Naive thymus-derived CD4-positive, alpha-beta T cell (primary cell): ENCODE measurements at regions of chr6 and their contacts with region 1.

Region 1: DNA sequence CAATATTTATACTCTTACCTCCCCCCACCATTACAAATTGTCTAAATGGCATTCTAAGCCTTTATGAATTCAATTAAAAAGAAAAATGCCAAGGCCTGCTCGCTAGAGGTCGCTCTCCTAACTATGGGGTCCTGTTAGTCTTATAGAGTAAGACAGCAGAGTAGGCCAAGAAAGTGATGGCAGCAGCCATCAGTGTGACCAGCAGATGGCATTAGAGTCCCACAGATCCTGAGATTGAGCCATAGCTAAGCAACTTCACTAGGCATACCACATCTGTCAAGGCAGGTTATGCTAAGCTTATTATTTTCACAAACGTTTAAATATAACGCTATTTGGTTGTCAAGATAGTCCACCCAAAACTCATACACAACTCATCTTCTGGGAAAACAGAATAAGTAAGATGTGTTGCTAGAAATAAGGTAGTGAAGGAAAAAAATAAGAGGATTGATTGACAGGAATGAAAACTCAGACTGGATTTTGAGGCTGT is 57.6 kb upstream of the SCAF8 start:
- DNase-seq: peak; percentile 60 to 89 (median 86)
- ATAC-seq: peak; percentile 100
- H3K4me3 ChIP-seq: no peak overlapping the region
- H3K4me3 Mint-ChIP-seq: no peak overlapping the region
- H3K27ac ChIP-seq: no peak overlapping the region
- H3K27ac Mint-ChIP-seq: no peak overlapping the region
- H3K4me1 ChIP-seq: no peaks in the 10 kb centered on the region
- H3K4me1 Mint-ChIP-seq: no peaks in the 10 kb centered on the region
- H3K27me3 ChIP-seq: no peaks in the 10 kb centered on the region
- H3K27me3 Mint-ChIP-seq: peaks cover 0 to 3% (median 0%) of the 10 kb centered on the region in 5 donors

Region 2: DNA sequence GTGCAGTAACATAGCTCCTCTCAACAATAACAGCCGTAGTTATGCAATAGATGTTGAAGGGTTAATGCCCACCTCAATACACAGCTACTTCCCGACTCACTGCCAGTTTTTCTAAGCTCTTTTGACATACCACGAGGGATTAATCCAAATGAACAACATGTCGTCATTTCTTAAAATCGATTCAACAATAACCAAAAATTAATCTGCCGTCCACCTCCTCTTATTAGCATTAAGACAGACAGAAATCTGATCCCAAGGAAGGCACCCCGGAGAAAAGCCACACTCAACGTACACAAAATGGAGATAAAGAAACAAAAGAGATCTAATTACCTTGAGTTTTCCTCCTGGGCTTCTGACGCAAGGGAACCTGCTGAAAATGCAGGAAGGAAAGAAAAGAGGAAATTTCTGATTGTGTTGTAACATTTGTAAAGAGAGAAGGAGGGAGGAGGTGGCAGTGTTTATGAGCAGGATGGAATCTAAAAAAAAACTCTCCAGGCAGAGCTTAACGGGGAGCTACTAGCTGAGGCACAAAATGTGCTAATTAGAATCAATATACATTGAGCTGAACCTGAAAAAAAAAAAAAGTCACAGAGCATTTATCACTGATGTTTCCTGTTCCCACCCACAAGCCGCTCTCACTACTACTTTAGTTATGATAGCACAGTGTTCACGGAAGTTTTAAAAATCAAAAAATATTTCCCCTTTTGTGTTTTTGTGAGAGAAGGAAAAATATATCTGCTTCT is 428.4 kb before region 1 on chr6:
- CTCF ChIA-PET with region 1: no interaction called
- POLR2A ChIA-PET with region 1: no interaction called
- intact Hi-C with region 1: no loop called
- DNase-seq: peak in 6 of 9 donors; percentile 45 to 67 (median 56)
- ATAC-seq: peak; percentile 64
- H3K4me3 ChIP-seq: peak overlapping the region; percentile 62
- H3K4me3 Mint-ChIP-seq: peak overlapping the region; percentile 84 to 100 (median 96)
- H3K27ac ChIP-seq: peak overlapping the region; percentile 81
- H3K27ac Mint-ChIP-seq: peak overlapping the region; percentile 90 to 97 (median 96)
- H3K4me1 ChIP-seq: peaks cover 52 to 59% of the 10 kb centered on the region in 2 donors
- H3K4me1 Mint-ChIP-seq: peaks cover 59 to 81% (median 77%) of the 10 kb centered on the region in 7 donors
- H3K27me3 ChIP-seq: no peaks in the 10 kb centered on the region
- H3K27me3 Mint-ChIP-seq: peaks cover 0 to 14% (median 0%) of the 10 kb centered on the region in 5 donors

Region 3: DNA sequence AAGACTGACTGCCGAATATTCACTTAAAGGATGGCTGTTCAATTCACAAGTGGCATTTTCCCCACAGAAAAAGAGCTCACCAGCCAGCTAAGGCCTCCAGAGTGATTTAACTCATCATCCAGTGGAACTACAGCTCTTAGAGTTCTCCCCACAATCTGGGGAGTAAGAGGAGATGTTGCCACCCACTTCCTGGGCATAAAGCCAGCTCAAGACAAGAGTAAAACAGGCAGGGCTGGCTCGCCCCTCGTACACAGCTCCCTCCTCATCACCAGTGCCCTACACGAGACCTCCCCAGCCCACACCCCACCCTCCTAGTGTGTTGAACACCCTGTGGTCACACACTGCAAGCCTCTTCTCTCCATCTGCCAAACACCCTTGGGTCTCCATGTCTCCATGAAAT is 271.9 kb before region 1 on chr6:
- CTCF ChIA-PET with region 1: no interaction called
- POLR2A ChIA-PET with region 1: no interaction called
- intact Hi-C with region 1: no loop called
- DNase-seq: no peak
- ATAC-seq: no peak
- H3K4me3 ChIP-seq: no peak overlapping the region
- H3K4me3 Mint-ChIP-seq: no peak overlapping the region
- H3K27ac ChIP-seq: no peak overlapping the region
- H3K27ac Mint-ChIP-seq: no peak overlapping the region
- H3K4me1 ChIP-seq: no peaks in the 10 kb centered on the region
- H3K4me1 Mint-ChIP-seq: no peaks in the 10 kb centered on the region
- H3K27me3 ChIP-seq: no peaks in the 10 kb centered on the region
- H3K27me3 Mint-ChIP-seq: no peaks in the 10 kb centered on the region

Region 4: DNA sequence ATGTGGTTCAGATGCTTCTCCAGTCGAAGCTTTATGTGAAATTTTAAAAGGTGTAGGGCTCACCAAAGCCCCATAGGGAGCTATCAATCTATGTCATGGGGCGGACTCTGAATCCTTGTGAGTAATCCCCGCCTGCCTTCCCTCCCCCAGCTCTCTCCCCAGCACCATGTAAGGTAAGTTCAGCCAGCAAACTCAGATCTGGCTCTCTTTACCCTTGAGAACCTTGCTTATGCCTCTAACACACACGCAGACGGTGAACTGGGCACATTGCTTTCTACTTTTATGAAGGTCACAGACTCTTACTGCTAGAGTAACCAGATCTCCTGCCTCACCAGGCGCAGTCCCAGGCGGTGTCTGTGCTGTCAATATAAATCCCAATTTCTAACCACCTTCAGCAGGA is 82.5 kb before region 1 on chr6:
- CTCF ChIA-PET with region 1: no interaction called
- POLR2A ChIA-PET with region 1: no interaction called
- intact Hi-C with region 1: no loop called
- DNase-seq: no peak
- ATAC-seq: no peak
- H3K4me3 ChIP-seq: no peak overlapping the region
- H3K4me3 Mint-ChIP-seq: no peak overlapping the region
- H3K27ac ChIP-seq: no peak overlapping the region
- H3K27ac Mint-ChIP-seq: no peak overlapping the region
- H3K4me1 ChIP-seq: no peaks in the 10 kb centered on the region
- H3K4me1 Mint-ChIP-seq: no peaks in the 10 kb centered on the region
- H3K27me3 ChIP-seq: no peaks in the 10 kb centered on the region
- H3K27me3 Mint-ChIP-seq: no peaks in the 10 kb centered on the region

Region 5: DNA sequence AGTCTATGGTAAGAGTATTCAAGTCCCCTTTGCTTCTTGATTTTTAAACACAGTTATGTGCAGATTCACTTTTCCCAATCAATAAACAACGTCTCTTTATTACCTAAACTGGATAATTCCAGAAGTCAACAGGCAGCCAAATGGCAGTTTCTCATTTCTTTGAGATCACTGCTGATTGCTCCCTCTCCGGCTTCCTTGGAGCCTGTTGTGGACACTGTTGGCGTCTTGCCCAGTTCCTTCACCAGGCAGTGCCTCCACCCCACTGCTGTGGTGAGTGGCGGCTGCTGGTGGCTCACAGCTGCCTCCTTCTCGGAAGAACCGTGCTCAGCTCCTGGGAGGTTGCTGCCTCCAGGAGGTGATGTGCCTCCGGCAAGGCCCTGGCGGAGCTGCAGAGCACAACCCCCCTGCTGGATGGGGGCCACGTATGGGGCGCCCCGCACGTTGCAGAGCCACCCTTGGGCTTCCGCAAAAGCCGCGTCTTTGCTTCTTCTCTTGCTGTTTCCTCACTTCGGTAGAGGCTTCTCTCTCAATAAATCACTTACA is 60.1 kb before region 1 on chr6:
- CTCF ChIA-PET with region 1: no interaction called
- POLR2A ChIA-PET with region 1: no interaction called
- intact Hi-C with region 1: no loop called
- DNase-seq: no peak
- ATAC-seq: no peak
- H3K4me3 ChIP-seq: no peak overlapping the region
- H3K4me3 Mint-ChIP-seq: no peak overlapping the region
- H3K27ac ChIP-seq: no peak overlapping the region
- H3K27ac Mint-ChIP-seq: no peak overlapping the region
- H3K4me1 ChIP-seq: no peaks in the 10 kb centered on the region
- H3K4me1 Mint-ChIP-seq: peaks cover 0 to 2% (median 0%) of the 10 kb centered on the region in 7 donors
- H3K27me3 ChIP-seq: no peaks in the 10 kb centered on the region
- H3K27me3 Mint-ChIP-seq: peaks cover 0 to 5% (median 0%) of the 10 kb centered on the region in 5 donors

Region 6: GRCh38 chr6:154705471-154706113 is 29.9 kb after region 1 on chr6:
- CTCF ChIA-PET with region 1: interaction called, 4 read pairs
- POLR2A ChIA-PET with region 1: no interaction called
- intact Hi-C with region 1: loop called in 1 of 2 experiments (anchors 1 kb)
- DNase-seq: peak in 3 of 9 donors; percentile 5 to 13 (median 7)
- ATAC-seq: no peak
- H3K4me3 ChIP-seq: no peak overlapping the region
- H3K4me3 Mint-ChIP-seq: no peak overlapping the region
- H3K27ac ChIP-seq: no peak overlapping the region
- H3K27ac Mint-ChIP-seq: no peak overlapping the region
- H3K4me1 ChIP-seq: no peaks in the 10 kb centered on the region
- H3K4me1 Mint-ChIP-seq: no peaks in the 10 kb centered on the region
- H3K27me3 ChIP-seq: no peaks in the 10 kb centered on the region
- H3K27me3 Mint-ChIP-seq: peaks cover 4 to 26% (median 13%) of the 10 kb centered on the region in 5 donors

Region 7: DNA sequence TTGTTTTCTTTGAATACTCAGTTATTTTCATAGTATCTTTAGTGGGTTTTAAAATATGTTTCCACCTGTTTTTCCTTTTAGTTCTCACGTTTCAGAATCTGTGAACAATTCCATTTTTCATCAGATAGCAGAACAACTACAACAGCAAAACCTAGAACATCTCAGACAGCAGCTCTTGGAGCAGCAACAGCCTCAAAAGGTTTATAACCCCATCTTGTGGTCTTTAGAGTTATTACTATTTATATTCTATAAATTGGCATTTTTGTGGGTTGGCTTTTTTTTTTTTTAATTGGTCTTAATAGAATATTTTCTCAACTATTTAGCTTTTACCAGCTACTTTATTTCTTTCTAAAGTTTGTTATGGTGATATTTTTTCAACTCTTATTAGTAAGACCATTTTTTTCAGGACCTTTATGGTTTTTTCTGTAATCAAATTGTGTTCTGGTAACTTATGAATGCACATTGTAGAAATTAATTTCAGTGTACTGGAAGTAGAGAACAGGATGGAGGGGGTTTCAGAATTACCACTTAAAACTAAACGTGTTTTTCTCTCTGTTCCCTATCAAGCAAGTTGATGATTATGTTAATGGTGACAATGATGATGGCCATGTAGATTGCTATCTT is 129.8 kb after region 1 on chr6:
- CTCF ChIA-PET with region 1: interaction called, 105 read pairs
- POLR2A ChIA-PET with region 1: no interaction called
- intact Hi-C with region 1: loop called (anchors 1 kb)
- DNase-seq: peak in 7 of 9 donors; percentile 16 to 59 (median 44)
- ATAC-seq: peak; percentile 80
- H3K4me3 ChIP-seq: no peak overlapping the region
- H3K4me3 Mint-ChIP-seq: no peak overlapping the region
- H3K27ac ChIP-seq: no peak overlapping the region
- H3K27ac Mint-ChIP-seq: peak overlapping the region in 3 of 9 donors; percentile 26 to 66 (median 48)
- H3K4me1 ChIP-seq: no peaks in the 10 kb centered on the region
- H3K4me1 Mint-ChIP-seq: peaks cover 1 to 8% (median 5%) of the 10 kb centered on the region in 7 donors
- H3K27me3 ChIP-seq: no peaks in the 10 kb centered on the region
- H3K27me3 Mint-ChIP-seq: no peaks in the 10 kb centered on the region

Region 8: DNA sequence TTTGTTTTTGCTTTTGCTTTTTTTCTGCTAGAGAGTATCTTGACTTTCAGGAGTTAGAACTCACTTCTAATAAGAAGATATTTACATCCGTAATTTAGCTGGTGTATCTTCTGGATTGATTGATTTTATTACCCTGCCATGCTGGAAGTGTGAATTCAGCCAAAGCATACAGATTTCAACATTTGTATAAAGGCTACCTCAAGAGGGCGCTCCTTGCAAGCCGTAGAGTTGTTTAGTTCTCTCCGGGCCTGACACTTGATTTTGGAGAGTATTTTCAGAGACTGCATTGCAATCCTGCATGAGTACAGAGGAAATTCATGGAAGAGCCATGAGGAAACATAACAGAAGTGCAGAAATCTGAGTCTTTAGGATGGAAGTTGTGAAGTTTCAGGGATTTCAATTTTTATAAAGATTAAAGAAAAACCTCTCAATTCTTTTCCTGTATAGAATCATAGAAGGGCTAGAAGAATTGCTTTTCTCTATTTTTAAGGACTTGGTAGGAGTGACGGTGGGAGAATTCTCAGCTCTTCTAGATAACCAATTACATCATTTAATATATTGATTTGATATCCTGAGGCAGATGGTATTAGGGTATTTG is 252.8 kb after region 1 on chr6:
- CTCF ChIA-PET with region 1: interaction called, 3 read pairs
- POLR2A ChIA-PET with region 1: no interaction called
- intact Hi-C with region 1: loop called (anchors 1 to 10 kb)
- DNase-seq: peak in 8 of 9 donors; percentile 7 to 55 (median 43)
- ATAC-seq: peak; percentile 57
- H3K4me3 ChIP-seq: no peak overlapping the region
- H3K4me3 Mint-ChIP-seq: no peak overlapping the region
- H3K27ac ChIP-seq: no peak overlapping the region
- H3K27ac Mint-ChIP-seq: no peak overlapping the region
- H3K4me1 ChIP-seq: no peaks in the 10 kb centered on the region
- H3K4me1 Mint-ChIP-seq: peaks cover 0 to 17% (median 8%) of the 10 kb centered on the region in 7 donors
- H3K27me3 ChIP-seq: no peaks in the 10 kb centered on the region
- H3K27me3 Mint-ChIP-seq: no peaks in the 10 kb centered on the region

Region 9: GRCh38 chr6:155530219-155530834 is 854.7 kb after region 1 on chr6:
- CTCF ChIA-PET with region 1: no interaction called
- POLR2A ChIA-PET with region 1: no interaction called
- intact Hi-C with region 1: loop called in 1 of 2 experiments (anchors 5 kb)
- DNase-seq: peak in 5 of 9 donors; percentile 22 to 40 (median 30)
- ATAC-seq: no peak
- H3K4me3 ChIP-seq: no peak overlapping the region
- H3K4me3 Mint-ChIP-seq: no peak overlapping the region
- H3K27ac ChIP-seq: no peak overlapping the region
- H3K27ac Mint-ChIP-seq: no peak overlapping the region
- H3K4me1 ChIP-seq: no peaks in the 10 kb centered on the region
- H3K4me1 Mint-ChIP-seq: peaks cover 0 to 10% (median 7%) of the 10 kb centered on the region in 7 donors
- H3K27me3 ChIP-seq: no peaks in the 10 kb centered on the region
- H3K27me3 Mint-ChIP-seq: peaks cover 0 to 11% (median 0%) of the 10 kb centered on the region in 5 donors